ENCODE measurements at regions of chr4 and their contacts with region 1.

Region 1: DNA sequence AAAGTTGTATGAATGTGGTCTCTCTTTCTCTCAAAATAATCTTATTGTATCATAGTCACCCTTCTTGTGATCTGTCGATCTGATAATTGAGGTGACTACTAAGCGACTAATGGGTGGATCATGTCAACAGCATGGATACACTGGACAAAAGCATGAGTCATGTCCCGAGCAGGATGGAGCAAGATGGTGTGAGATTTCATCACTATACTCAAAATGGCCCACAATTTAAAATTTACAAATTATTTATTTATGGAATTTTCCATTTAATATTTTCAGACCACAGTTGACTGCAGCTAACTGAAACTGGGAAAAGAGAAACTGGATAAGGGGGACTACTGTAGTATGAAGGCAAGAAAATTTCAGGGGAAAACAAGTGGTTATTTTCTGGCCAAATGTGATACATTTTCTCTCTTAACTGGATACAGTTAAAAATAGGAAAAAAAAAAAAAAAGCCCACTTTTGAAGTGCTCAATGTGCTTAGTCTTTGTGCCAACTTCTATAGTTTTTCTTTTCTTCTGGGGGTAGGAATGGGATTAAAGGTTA is 25.3 kb downstream of the FAM241A start:
- DNase-seq: peak; percentile 94
- ATAC-seq: peak; percentile 49
- H3K4me3 ChIP-seq: peak overlapping the region in 1 of 2 experiments; percentile 51; a peak in 2 of 4 replicates
- H3K27ac ChIP-seq: peak overlapping the region; percentile 95
- H3K4me1 ChIP-seq: peaks cover 67 to 80% of the 10 kb centered on the region in 2 experiments
- H3K27me3 ChIP-seq: no peaks in the 10 kb centered on the region
- CTCF ChIP-seq: no peak
- POLR2A ChIP-seq: no peak
- RAD21 ChIP-seq: no peak

Region 2: DNA sequence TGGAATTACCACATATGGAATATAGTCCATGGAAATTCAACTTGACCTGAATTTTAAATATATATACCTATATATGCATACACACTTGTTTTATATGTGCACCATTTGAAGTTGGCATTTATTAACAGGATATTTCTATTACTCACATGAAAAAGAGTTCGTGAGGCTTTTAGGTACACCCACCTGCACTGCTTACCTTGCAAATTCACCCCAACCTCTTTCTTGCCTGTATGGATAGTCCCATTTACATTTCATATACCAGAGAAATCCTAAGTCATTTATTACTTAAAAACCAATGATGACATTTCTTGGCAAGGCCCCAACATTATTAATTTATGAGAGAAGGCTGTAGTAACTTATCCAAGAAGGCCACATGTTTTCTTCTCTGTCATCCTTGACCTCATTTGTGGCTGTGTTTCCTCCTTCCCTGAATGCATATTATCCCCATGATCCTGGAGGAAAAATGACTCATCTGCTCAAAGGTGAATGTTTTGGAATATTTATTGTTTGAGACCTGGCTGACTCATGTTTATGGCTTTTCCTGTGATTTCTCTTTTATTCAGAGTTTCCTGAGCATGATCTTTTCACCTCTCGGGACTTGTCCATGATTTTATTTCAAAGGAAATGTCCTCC is 87.5 kb before region 1 on chr4:
- CTCF ChIA-PET with region 1: no interaction called
- POLR2A ChIA-PET with region 1: interaction called, 3 read pairs
- RAD21 ChIA-PET with region 1: no interaction called
- intact Hi-C with region 1: loop called (anchors 5 kb)
- DNase-seq: peak; percentile 96
- ATAC-seq: peak; percentile 86
- H3K4me3 ChIP-seq: peak overlapping the region in 1 of 2 experiments; percentile 29; a peak in 2 of 4 replicates
- H3K27ac ChIP-seq: peak overlapping the region; percentile 92
- H3K4me1 ChIP-seq: peaks cover 43 to 70% of the 10 kb centered on the region in 2 experiments
- H3K27me3 ChIP-seq: no peaks in the 10 kb centered on the region
- CTCF ChIP-seq: no peak
- POLR2A ChIP-seq: no peak
- RAD21 ChIP-seq: peak; percentile 16; the same call in 1 of the 2 replicates

Region 3: DNA sequence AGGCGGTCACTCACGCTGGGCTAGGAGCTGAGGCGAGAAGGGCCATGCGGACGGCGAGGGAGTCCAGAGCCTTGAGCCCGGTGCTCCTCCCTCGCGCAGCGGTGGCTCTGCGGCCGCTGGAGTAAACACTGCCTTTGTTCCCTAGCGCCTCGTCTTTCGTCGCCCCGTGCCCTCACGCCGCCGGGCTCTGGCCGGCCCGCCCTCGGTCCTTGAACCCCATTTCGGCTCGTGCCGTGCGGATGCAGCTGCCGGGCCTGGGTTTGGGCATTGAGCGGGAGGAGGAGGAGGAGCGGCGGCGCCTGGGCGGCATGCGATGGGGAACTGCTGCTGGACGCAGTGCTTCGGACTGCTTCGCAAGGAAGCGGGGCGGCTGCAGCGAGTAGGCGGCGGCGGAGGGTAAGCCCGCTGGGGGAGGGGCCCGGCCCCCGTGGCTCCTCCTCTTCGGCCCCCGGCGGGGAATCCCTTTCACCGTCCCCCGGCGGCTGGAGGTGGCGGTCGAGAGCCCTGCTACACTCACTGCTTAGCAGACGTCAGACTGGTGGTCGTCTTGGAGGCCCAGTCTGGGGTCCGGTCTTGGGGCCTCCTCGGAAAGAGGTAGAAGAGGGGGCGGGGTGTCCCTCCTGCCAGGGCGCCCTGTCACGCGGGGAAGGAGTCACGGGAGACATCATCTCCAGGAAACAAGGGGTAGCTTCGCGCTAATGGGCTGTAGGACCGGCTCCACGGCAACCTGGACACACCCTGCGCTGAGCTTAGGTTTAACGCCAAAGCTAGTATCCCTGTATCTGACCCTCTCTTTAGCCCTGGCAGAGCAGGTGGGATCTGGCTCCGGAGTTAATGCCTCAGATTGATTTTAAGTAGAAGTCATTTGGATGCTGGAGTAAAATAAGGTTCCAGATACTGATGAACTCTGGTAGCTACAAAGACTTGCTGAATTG is 61.5 kb after region 1 on chr4 and contains the start of gene AP1AR:
- CTCF ChIA-PET with region 1: no interaction called
- POLR2A ChIA-PET with region 1: interaction called, 3 read pairs
- RAD21 ChIA-PET with region 1: interaction called in 1 of 2 experiments, 3 read pairs
- intact Hi-C with region 1: loop called (anchors 2 kb)
- DNase-seq: peak; percentile 44
- ATAC-seq: peak; percentile 76
- H3K4me3 ChIP-seq: peak within 1 kb of the TSS; percentile 82 to 89
- H3K27ac ChIP-seq: peak within 1 kb of the TSS; percentile 79
- H3K4me1 ChIP-seq: peaks cover 18 to 38% of the 10 kb centered on the region in 2 experiments; a peak in 3 of 4 replicates
- H3K27me3 ChIP-seq: no peaks in the 10 kb centered on the region
- CTCF ChIP-seq: peak in 2 of 3 experiments; percentile 38 to 40; a peak in 3 of 6 replicates
- POLR2A ChIP-seq: peak; percentile 65
- RAD21 ChIP-seq: no peak
- total RNA-seq, gene AP1AR: 56.7 TPM

Region 4: DNA sequence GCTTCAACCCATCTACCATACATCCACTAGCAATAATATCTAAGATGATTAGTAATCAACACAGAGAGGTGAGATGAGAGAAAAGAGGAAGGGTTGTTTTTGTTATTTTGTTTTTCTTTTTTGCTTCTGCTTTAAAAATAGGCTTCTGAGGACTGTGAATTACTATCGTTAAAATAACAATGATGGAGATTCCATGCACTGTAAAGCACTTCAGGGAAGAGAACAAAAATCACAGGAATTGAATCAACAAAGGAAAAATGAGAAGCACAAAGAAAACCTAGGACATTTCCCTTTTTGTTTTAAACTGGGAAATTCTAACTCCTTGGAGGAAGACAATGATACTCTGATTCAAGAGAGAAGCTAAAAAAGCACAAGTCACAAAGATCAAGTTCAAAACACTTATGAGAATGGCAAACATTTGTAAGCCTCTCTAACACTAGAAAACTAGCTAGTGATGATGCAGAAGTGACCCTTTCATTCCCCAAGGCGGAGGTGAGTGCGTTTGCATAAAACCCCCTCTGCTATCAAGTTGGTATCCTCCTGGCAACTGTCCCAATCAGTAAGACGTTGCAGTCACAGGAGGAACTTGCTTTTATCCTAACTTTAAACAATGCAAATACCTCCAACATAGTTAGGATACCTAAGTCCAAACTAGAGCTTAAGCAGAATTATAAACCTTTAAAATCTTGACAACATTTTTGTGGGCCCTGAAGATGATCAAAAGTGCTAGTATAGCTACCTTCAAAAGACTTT is 1282.5 kb after region 1 on chr4:
- CTCF ChIA-PET with region 1: no interaction called
- POLR2A ChIA-PET with region 1: no interaction called
- RAD21 ChIA-PET with region 1: no interaction called
- intact Hi-C with region 1: no loop called
- DNase-seq: no peak
- ATAC-seq: peak; percentile 48
- H3K4me3 ChIP-seq: no peak overlapping the region
- H3K27ac ChIP-seq: no peak overlapping the region; the same call in 1 of the 2 replicates
- H3K4me1 ChIP-seq: peaks cover 11 to 20% of the 10 kb centered on the region in 2 experiments; a peak in 3 of 4 replicates
- H3K27me3 ChIP-seq: no peaks in the 10 kb centered on the region
- CTCF ChIP-seq: no peak
- POLR2A ChIP-seq: no peak
- RAD21 ChIP-seq: no peak

Measured in HCT116 (cell line).